ENCODE measurements at regions of chr12 and their contacts with region 1.

Region 1: GRCh38 chr12:45878630-45879255 is 111.6 kb downstream of the SCAF11 start:
- DNase-seq: no peak
- ATAC-seq: no peak
- H3K4me3 ChIP-seq: no peak overlapping the region
- H3K27ac ChIP-seq: no peak overlapping the region
- H3K4me1 ChIP-seq: no peaks in the 10 kb centered on the region
- H3K27me3 ChIP-seq: no peaks in the 10 kb centered on the region
- CTCF ChIP-seq: no peak

Region 2: DNA sequence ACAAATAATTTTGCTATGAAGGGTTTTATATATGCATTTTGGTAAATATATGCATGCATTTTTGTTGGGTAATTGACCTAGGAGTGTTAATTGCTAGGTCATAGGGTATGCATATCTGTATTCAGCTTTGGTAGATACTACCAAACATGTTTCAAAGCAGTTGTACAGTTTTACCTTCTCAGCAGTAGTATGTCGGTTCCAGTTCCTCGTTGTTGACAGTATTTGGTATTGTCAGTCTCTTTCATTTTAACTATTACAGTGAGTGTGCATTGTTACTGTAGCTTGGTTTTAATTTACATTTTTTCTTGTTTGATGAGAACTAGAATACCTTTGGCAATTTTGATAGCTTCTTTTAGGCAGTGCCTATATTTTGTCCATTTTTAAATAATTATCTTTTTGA is 50.3 kb before region 1 on chr12:
- intact Hi-C with region 1: loop called in 1 of 2 experiments (anchors 2 kb)
- DNase-seq: no peak
- ATAC-seq: no peak
- H3K4me3 ChIP-seq: no peak overlapping the region
- H3K27ac ChIP-seq: no peak overlapping the region
- H3K4me1 ChIP-seq: no peaks in the 10 kb centered on the region
- H3K27me3 ChIP-seq: no peaks in the 10 kb centered on the region
- CTCF ChIP-seq: no peak